ENCODE measurements at regions of chr14 and their contacts with region 1.

Region 1: GRCh38 chr14:102316743-102317563 is 2.6 kb upstream of the ZNF839 start:
- DNase-seq: peak; percentile 89
- ATAC-seq: peak; percentile 45 to 52
- H3K4me3 ChIP-seq: peak overlapping the region; percentile 51 to 66 (median 63)
- H3K27ac ChIP-seq: peak overlapping the region; percentile 92 to 99 (median 97)
- H3K4me1 ChIP-seq: peaks cover 50 to 51% of the 10 kb centered on the region in 2 donors
- H3K27me3 ChIP-seq: no peaks in the 10 kb centered on the region
- CTCF ChIP-seq: peak; percentile 78 to 87 (median 85)
- POLR2A ChIP-seq: no peak

Region 2: DNA sequence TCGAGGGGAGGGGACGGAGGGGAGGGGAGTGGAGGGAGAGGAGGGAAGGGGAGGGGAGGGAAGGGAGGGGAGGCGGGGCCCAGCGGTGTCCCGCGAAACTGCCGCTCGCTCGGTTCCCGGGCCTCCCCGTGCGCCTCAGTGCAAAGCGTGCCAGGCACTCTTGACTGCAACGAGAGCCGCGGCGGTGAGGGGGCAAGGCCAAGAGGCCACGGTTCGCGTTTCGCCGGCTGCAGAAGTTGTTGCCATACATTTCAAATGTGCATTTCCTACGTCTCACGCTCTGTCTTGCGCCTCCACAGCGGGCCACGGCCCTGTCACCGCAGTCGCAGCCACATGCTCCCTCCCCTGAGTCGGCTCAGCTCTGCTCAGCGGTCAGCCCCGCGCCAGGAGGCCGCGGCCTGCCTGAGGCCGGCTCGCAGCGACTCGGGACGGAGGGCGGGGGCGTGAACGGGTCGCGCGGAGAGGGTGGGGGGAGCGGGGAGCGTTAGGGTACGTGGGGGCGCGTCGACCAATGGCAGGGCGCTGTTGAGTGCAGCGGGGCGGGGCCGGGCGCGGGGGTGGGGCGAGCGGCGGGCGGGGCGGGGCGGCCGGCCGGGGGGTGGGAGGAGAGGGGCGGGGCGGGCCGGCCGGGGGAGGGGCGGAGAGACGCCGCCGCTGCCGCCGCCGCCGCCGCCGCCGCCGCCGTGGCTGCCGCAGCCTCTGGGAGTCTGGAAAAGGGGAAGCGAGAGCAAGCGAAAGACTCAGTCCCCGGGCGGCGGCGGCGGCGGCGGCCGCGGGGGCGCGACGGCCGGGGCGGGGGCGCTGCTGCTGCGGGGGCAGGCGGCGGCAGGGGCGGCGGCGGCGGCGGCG is 555.7 kb before region 1 on chr14 and contains the start of gene PPP2R5C:
- in situ Hi-C with region 1: loop called in 1 of 4 experiments (anchors 25 kb)
- intact Hi-C with region 1: loop called (anchors 1 kb)
- DNase-seq: peak; percentile 91 to 92
- ATAC-seq: peak; percentile 69 to 72
- H3K4me3 ChIP-seq: peak within 1 kb of the TSS; percentile 83 to 99 (median 93)
- H3K27ac ChIP-seq: peak within 1 kb of the TSS; percentile 93 to 98 (median 96)
- H3K4me1 ChIP-seq: peaks cover 8 to 16% of the 10 kb centered on the region in 2 donors
- H3K27me3 ChIP-seq: no peaks in the 10 kb centered on the region
- CTCF ChIP-seq: no peak
- POLR2A ChIP-seq: peak; percentile 72 to 74
- total RNA-seq, gene PPP2R5C: 35.4 to 65.9 (median 49.3) TPM

Region 3: GRCh38 chr14:101889898-101890297 is 427.1 kb before region 1 on chr14:
- in situ Hi-C with region 1: no loop called
- intact Hi-C with region 1: no loop called
- DNase-seq: no peak
- ATAC-seq: no peak
- H3K4me3 ChIP-seq: no peak overlapping the region
- H3K27ac ChIP-seq: no peak overlapping the region
- H3K4me1 ChIP-seq: no peaks in the 10 kb centered on the region
- H3K27me3 ChIP-seq: no peaks in the 10 kb centered on the region
- CTCF ChIP-seq: no peak
- POLR2A ChIP-seq: no peak

Region 4: DNA sequence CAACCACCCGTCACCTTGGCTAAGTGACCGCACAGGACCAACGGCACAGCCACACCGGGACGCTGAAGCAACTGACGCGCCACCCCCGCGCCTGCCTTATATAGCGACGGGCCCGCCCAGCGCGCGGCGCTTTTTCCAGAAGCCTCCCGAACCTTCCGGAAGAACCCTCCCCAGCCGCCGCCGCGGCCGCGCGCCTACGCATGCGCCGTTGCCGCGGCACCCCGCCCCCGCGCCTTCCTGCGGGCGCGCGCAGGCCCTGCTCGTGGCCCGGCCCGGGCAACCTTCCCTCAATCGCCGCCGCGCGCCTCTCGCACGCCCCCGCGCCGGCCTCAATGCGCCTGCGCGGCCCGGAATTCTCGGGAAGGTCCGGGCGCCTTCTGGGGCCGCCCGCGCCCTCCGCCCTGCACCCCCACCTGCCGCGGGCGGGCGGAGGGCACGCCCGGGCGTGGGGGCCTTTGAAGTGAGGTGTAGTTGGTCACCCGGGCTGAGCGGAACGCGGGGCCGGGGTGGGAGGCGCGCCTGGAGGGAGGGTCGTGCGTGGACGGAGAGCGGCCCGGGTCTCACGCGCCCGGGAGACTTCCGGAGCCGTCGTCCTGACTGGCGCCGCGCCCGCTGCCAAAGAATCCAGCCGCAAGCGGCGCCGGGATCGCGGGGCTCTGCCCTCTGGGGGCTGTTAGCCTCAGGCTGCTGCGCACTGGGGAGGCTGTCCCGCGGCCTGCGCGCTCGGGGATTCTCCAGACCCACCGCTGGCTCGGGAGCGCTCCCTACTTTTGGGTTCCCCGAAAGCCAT is 229.8 kb before region 1 on chr14 and contains the start of gene HSP90AA1:
- in situ Hi-C with region 1: no loop called
- intact Hi-C with region 1: loop called (anchors 2 kb)
- DNase-seq: peak; percentile 84 to 93
- ATAC-seq: peak; percentile 88 to 90
- H3K4me3 ChIP-seq: peak within 1 kb of the TSS; percentile 72 to 93 (median 90)
- H3K27ac ChIP-seq: peak within 1 kb of the TSS; percentile 96 to 99 (median 99)
- H3K4me1 ChIP-seq: peaks cover 26 to 43% of the 10 kb centered on the region in 2 donors
- H3K27me3 ChIP-seq: no peaks in the 10 kb centered on the region
- CTCF ChIP-seq: peak in 2 of 5 experiments; percentile 25 to 32
- POLR2A ChIP-seq: peak; percentile 97 to 99
- total RNA-seq, gene HSP90AA1: 227 to 609 (median 488) TPM

Region 5: DNA sequence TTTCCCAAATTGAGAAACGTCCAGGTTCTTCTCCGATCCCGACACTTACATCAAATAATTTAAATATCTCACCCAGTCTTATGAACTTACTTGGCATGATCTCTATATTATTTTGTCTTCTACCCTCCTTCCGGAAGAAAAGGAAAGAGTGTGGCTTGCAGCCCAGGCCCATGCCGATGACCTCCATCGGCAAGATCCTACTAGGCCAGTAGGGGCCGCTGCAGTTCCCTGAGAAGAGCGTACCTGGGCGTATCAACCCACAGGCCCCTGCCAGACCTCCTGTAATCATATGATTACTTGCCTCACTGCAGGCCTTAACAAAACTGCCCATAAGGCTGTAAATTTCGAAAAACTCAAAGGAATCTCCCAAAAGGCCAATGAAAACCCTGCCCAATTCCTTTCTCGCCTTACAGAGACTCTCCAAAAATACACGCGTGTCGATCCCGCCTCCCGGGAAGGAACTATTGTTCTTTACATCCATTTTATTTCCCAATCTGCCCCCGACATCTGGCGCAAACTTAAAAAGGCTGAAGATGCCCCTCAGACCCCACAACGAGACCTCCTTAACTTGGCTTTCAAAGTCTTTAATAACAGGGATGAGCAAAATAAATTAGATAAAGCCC is 81.6 kb before region 1 on chr14:
- in situ Hi-C with region 1: loop called in 3 of 4 experiments (anchors 5 to 10 kb)
- intact Hi-C with region 1: loop called (anchors 1 kb)
- DNase-seq: peak; percentile 40 to 75
- ATAC-seq: peak; percentile 79 to 90
- H3K4me3 ChIP-seq: peak overlapping the region in 1 of 4 donors; percentile 11
- H3K27ac ChIP-seq: no peak overlapping the region
- H3K4me1 ChIP-seq: no peaks in the 10 kb centered on the region
- H3K27me3 ChIP-seq: no peaks in the 10 kb centered on the region
- CTCF ChIP-seq: peak; percentile 64 to 77 (median 72)
- POLR2A ChIP-seq: no peak

Region 6: DNA sequence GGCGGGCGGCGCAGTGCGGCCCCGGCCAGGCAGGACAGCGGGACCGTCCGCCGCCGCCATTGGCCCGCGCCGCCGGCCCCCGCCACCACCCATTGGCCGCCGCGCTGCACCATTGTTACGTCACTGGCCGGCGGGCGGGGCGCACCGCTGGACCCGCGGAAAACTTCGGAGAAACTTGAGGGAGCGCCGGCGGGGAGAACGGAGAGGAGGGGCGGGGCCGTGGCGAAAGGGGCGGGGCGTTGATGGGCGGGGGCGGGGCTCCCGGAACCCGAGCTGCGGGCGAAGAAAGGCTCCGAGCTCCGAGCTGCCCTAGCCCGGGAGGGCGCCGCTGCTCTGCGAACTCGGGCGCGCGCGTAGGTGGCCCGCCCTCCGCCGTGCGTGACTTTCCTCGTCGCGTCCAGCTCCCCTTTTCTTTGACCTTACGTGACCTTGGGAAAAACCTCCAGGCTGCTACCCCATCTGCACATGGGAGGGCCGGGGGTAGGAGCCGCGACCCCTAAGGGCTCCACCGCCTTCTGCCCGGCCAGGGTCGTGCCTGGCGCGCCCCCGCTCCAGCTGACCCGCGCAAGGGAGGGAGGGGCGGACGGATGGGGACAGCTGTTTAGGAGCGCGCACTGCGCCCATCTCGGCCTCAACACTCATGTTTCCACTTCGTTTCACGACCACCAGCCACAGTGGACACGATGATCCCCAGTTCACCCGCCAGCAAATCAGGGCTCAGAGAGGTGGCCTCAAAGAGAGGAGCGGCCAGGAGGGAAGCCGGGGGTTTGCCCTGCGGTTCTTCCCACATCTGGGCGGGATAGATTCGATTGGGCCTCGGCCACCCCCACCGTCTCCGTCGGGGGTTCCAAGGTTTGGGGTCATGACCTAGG is 193.0 kb after region 1 on chr14 and contains the start of gene ANKRD9:
- in situ Hi-C with region 1: loop called in 1 of 4 experiments (anchors 25 kb)
- intact Hi-C with region 1: loop called (anchors 2 kb)
- DNase-seq: peak; percentile 93 to 95
- ATAC-seq: peak; percentile 57 to 74
- H3K4me3 ChIP-seq: peak within 1 kb of the TSS; percentile 65 to 81 (median 70)
- H3K27ac ChIP-seq: peak within 1 kb of the TSS; percentile 95 to 99 (median 96)
- H3K4me1 ChIP-seq: peaks cover 14 to 33% of the 10 kb centered on the region in 2 donors
- H3K27me3 ChIP-seq: no peaks in the 10 kb centered on the region
- CTCF ChIP-seq: no peak
- POLR2A ChIP-seq: peak; percentile 74 to 81
- total RNA-seq, gene ANKRD9: 155 to 450 (median 216) TPM

Region 7: DNA sequence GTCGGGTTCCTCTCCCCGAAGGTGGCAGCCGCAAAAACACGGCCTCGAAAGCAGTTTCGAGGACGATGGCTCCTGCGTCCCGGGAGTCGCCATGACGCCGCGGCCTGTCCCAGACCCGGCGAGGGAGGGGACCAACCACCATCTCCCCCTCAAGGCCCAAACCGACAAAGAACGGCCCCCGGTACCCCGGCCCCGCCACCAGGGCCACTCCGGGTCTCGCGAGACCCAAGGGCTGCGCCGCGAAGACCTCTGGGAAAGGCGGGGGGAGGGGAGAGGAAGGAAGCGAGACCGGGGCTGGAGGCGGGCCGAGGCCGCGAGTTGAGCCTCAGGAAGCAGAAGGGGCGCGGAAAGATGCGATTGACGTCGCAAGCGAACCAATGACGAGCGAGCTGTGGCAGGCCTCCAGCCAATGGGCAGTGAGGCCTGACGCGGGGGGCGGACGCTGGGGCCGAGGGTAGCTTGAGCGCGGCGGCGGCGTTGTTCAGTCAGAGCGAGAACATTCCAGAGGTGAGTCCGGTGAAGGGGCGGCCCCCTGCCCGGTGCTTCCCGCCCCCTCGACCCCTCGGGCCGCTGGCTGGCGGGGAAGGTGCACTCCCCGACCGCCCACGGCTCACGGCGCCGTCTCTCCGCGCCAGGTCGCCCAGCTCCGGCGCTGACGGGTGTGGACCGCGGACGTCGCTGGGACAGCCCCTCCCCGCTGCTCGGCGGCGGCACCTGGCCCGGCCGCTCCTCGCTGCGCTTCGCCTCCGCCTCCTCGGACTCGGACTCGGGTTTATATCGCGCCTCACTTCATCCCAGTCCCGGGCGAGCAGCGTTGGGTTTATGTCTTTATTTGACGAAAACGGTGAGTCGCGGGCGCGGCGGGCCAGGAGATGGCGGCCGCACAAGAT is 1017.0 kb after region 1 on chr14 and contains the start of gene EIF5:
- in situ Hi-C with region 1: no loop called
- intact Hi-C with region 1: loop called (anchors 5 kb)
- DNase-seq: peak; percentile 99
- ATAC-seq: peak; percentile 90 to 91
- H3K4me3 ChIP-seq: peak within 1 kb of the TSS; percentile 80 to 100 (median 86)
- H3K27ac ChIP-seq: peak within 1 kb of the TSS; percentile 92 to 100 (median 98)
- H3K4me1 ChIP-seq: peaks cover 25 to 35% of the 10 kb centered on the region in 2 donors
- H3K27me3 ChIP-seq: no peaks in the 10 kb centered on the region
- CTCF ChIP-seq: peak; percentile 26 to 72 (median 59)
- POLR2A ChIP-seq: peak; percentile 98 to 100
- total RNA-seq, gene EIF5: 313 to 538 (median 374) TPM